Left lung (tissue), 14 donors: ENCODE measurements at regions of chr10 and their contacts with region 1.

Region 1: GRCh38 chr10:132939957-132940790 is 2.2 kb downstream of the CFAP46 start:
- DNase-seq: peak in 3 of 4 donors; percentile 11 to 82 (median 50)
- ATAC-seq: peak; percentile 67
- H3K4me3 ChIP-seq: no peak overlapping the region
- H3K27ac ChIP-seq: no peak overlapping the region
- H3K4me1 ChIP-seq: peaks cover 3 to 12% of the 10 kb centered on the region in 2 donors
- H3K27me3 ChIP-seq: peaks cover 19 to 80% of the 10 kb centered on the region in 2 donors
- CTCF ChIP-seq: peak; percentile 62 to 74

Region 2: GRCh38 chr10:133044401-133044804 is 104.2 kb after region 1 on chr10:
- intact Hi-C with region 1: no loop called
- DNase-seq: no peak
- ATAC-seq: no peak
- H3K4me3 ChIP-seq: no peak overlapping the region
- H3K27ac ChIP-seq: no peak overlapping the region
- H3K4me1 ChIP-seq: no peaks in the 10 kb centered on the region
- H3K27me3 ChIP-seq: peaks cover 0 to 88% of the 10 kb centered on the region in 2 donors
- CTCF ChIP-seq: no peak

Region 3: GRCh38 chr10:133124357-133125211 is 184.4 kb after region 1 on chr10:
- intact Hi-C with region 1: loop called in 1 of 2 experiments (anchors 10 kb)
- DNase-seq: peak; percentile 15 to 87 (median 22)
- ATAC-seq: peak; percentile 91
- H3K4me3 ChIP-seq: no peak overlapping the region
- H3K27ac ChIP-seq: no peak overlapping the region
- H3K4me1 ChIP-seq: no peaks in the 10 kb centered on the region
- H3K27me3 ChIP-seq: peaks cover 0 to 59% of the 10 kb centered on the region in 2 donors
- CTCF ChIP-seq: peak; percentile 51 to 66